ENCODE measurements at regions of chr5 and their contacts with region 1.

Region 1: GRCh38 chr5:36305571-36306326 is 4.0 kb upstream of the RANBP3L start:
- DNase-seq: peak in 2 of 4 experiments; percentile 34 to 57
- ATAC-seq: peak; percentile 92
- H3K4me3 ChIP-seq: no peak overlapping the region
- H3K27ac ChIP-seq: no peak overlapping the region
- H3K4me1 ChIP-seq: no peaks in the 10 kb centered on the region
- H3K27me3 ChIP-seq: 0 out of 5 replicates have a peak, but pooled peaks cover 2 to 4% of the 10 kb centered on the region in 2 experiments
- CTCF ChIP-seq: peak; percentile 80 to 89 (median 86)
- EP300 ChIP-seq: no peak
- POLR2A ChIP-seq: no peak
- RAD21 ChIP-seq: peak; percentile 89 to 92

Region 2: GRCh38 chr5:36060420-36060887 is 245.3 kb before region 1 on chr5:
- CTCF ChIA-PET with region 1: no interaction called
- POLR2A ChIA-PET with region 1: no interaction called
- in situ Hi-C with region 1: no loop called
- intact Hi-C with region 1: loop called (anchors 1 kb)
- DNase-seq: peak; percentile 21 to 35 (median 24)
- ATAC-seq: peak; percentile 93
- H3K4me3 ChIP-seq: no peak overlapping the region
- H3K27ac ChIP-seq: no peak overlapping the region
- H3K4me1 ChIP-seq: no peaks in the 10 kb centered on the region
- H3K27me3 ChIP-seq: peaks cover 5 to 8% of the 10 kb centered on the region in 2 experiments; a peak in 4 of 5 replicates
- CTCF ChIP-seq: peak; percentile 46 to 64 (median 49); a peak in 4 of 6 replicates
- EP300 ChIP-seq: no peak
- POLR2A ChIP-seq: no peak
- RAD21 ChIP-seq: peak; percentile 38 to 74

Region 3: DNA sequence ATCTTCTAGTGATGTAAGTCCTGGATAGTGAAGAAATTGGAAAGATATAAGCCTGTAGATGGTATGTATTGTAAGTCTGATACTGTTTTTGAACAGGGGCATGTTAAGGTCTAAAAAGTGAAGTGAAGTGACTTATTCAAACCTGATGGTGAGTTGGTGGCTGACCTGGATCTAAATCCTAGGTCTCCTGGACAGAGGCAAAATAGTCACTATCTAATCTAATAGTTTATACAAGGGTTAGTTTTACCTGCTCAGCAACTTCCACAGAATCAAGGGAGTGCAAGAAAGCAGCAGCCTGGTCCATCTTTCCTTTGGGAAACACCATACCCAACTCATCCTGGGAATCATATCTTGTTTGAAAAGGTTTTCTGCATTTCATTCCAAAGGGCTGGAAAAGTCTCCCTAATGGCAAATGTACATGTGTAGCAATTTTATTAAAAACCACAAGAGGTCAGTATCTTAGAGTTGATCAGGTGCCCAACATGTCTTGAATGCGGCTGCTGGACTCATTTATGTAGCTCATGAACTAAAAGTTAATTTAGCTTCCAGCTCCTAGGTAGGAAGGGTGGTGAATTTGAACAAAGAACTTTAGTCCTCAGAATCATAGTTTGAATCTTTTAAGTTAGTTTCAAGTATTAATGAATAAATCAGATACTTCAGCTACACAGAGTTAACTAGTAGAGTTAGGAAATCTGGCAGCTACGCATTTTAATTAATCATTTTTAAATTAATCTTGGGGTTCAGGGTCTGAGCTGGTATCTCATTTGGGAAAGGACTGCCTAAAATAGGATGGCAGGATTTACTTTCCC is 127.8 kb before region 1 on chr5:
- CTCF ChIA-PET with region 1: interaction called, 8 read pairs
- POLR2A ChIA-PET with region 1: no interaction called
- in situ Hi-C with region 1: no loop called
- intact Hi-C with region 1: loop called (anchors 1 kb)
- DNase-seq: peak in 2 of 4 experiments; percentile 17 to 37
- ATAC-seq: peak; percentile 81
- H3K4me3 ChIP-seq: no peak overlapping the region
- H3K27ac ChIP-seq: no peak overlapping the region
- H3K4me1 ChIP-seq: no peaks in the 10 kb centered on the region
- H3K27me3 ChIP-seq: no peaks in the 10 kb centered on the region
- CTCF ChIP-seq: peak; percentile 36 to 65 (median 52); a peak in 5 of 6 replicates
- EP300 ChIP-seq: no peak
- POLR2A ChIP-seq: no peak
- RAD21 ChIP-seq: peak; percentile 43 to 70

Region 4: DNA sequence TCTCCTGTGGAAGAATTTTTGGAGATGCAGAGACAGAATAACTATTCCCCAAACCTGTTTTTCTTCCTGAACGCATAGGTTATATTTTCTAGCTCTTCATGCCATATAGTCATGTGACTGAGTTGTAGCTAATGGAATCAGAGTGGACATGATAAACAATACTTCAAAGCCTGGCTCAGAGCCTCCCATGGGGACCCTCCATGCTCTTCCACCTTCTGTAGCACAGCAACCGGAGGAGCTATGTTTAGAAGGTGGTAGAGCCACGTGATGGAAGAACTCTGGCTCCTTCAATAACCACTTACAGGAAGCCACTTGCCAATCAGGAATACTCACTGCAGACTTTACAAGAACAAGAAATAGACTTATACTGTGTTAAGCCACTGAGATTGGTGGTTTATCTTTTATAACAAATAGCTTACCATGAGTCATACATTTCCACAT is 103.2 kb before region 1 on chr5:
- CTCF ChIA-PET with region 1: no interaction called
- POLR2A ChIA-PET with region 1: no interaction called
- in situ Hi-C with region 1: no loop called
- intact Hi-C with region 1: no loop called
- DNase-seq: no peak
- ATAC-seq: no peak
- H3K4me3 ChIP-seq: no peak overlapping the region
- H3K27ac ChIP-seq: no peak overlapping the region
- H3K4me1 ChIP-seq: no peaks in the 10 kb centered on the region
- H3K27me3 ChIP-seq: no peaks in the 10 kb centered on the region
- CTCF ChIP-seq: no peak
- EP300 ChIP-seq: no peak
- POLR2A ChIP-seq: no peak
- RAD21 ChIP-seq: no peak

Region 5: DNA sequence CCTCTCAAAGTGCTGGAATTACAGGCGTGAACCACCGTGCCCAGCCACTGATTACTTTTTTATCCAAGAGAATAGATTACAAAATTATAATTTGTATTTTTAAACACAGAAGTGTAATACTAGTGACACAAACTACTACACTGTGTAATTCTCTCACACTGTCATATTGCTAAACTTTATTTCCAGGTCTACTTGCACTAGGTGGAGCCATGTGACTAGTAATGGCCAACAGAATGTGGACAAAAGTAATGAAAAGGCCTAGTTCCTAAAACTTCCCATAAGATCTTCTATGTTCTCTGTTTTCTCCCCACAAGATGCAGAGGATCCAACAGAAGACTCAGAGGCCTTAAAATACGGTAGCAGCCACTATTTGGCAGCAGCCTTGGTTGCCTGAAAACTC is 91.3 kb before region 1 on chr5:
- CTCF ChIA-PET with region 1: interaction called, 12 read pairs
- POLR2A ChIA-PET with region 1: no interaction called
- in situ Hi-C with region 1: no loop called
- intact Hi-C with region 1: loop called (anchors 1 kb)
- DNase-seq: peak in 1 of 4 experiments; percentile 21
- ATAC-seq: peak; percentile 63; the same call in 2 of the 3 replicates
- H3K4me3 ChIP-seq: no peak overlapping the region
- H3K27ac ChIP-seq: no peak overlapping the region
- H3K4me1 ChIP-seq: no peaks in the 10 kb centered on the region
- H3K27me3 ChIP-seq: no peaks in the 10 kb centered on the region
- CTCF ChIP-seq: peak; percentile 8 to 64 (median 24); a peak in 3 of 6 replicates
- EP300 ChIP-seq: no peak
- POLR2A ChIP-seq: no peak
- RAD21 ChIP-seq: peak; percentile 58 to 68

Region 6: GRCh38 chr5:36270220-36270574 is 35.6 kb before region 1 on chr5:
- CTCF ChIA-PET with region 1: interaction called, 8 read pairs
- POLR2A ChIA-PET with region 1: interaction called, 3 read pairs
- in situ Hi-C with region 1: no loop called
- intact Hi-C with region 1: loop called (anchors 1 kb)
- DNase-seq: no peak
- ATAC-seq: no peak
- H3K4me3 ChIP-seq: no peak overlapping the region
- H3K27ac ChIP-seq: no peak overlapping the region
- H3K4me1 ChIP-seq: no peaks in the 10 kb centered on the region
- H3K27me3 ChIP-seq: no peaks in the 10 kb centered on the region
- CTCF ChIP-seq: no peak
- EP300 ChIP-seq: no peak
- POLR2A ChIP-seq: no peak
- RAD21 ChIP-seq: no peak

Measured in K562 (cell line).